PC-3 (cell line): ENCODE measurements at regions of chr5 and their contacts with region 1.

Region 1: GRCh38 chr5:57435701-57436134 is 46.9 kb downstream of the ACTBL2 start:
- DNase-seq: peak; percentile 93
- ATAC-seq: peak; percentile 92
- H3K4me3 ChIP-seq: no peak overlapping the region
- H3K27ac ChIP-seq: peak overlapping the region; percentile 99
- H3K4me1 ChIP-seq: peaks cover 47% of the 10 kb centered on the region
- H3K27me3 ChIP-seq: no peaks in the 10 kb centered on the region
- CTCF ChIP-seq: no peak

Region 2: GRCh38 chr5:57173185-57174127 is 262.3 kb before region 1 on chr5 and contains the start of gene GPBP1:
- CTCF ChIA-PET with region 1: no interaction called
- POLR2A ChIA-PET with region 1: interaction called, 3 read pairs
- intact Hi-C with region 1: loop called (anchors 10 kb)
- DNase-seq: peak; percentile 90
- ATAC-seq: peak; percentile 77
- H3K4me3 ChIP-seq: peak within 1 kb of the TSS; percentile 98
- H3K27ac ChIP-seq: peak within 1 kb of the TSS; percentile 98
- H3K4me1 ChIP-seq: no peaks in the 10 kb centered on the region
- H3K27me3 ChIP-seq: no peaks in the 10 kb centered on the region
- CTCF ChIP-seq: no peak
- total RNA-seq, gene GPBP1: 29.5 and 31.8 TPM in 2 replicates

Region 3: GRCh38 chr5:57338068-57338892 is 97.4 kb before region 1 on chr5:
- CTCF ChIA-PET with region 1: no interaction called
- POLR2A ChIA-PET with region 1: no interaction called
- intact Hi-C with region 1: loop called (anchors 1 kb)
- DNase-seq: peak; percentile 62
- ATAC-seq: peak; percentile 67
- H3K4me3 ChIP-seq: no peak overlapping the region
- H3K27ac ChIP-seq: peak overlapping the region; percentile 67
- H3K4me1 ChIP-seq: peaks cover 49% of the 10 kb centered on the region
- H3K27me3 ChIP-seq: no peaks in the 10 kb centered on the region
- CTCF ChIP-seq: peak; percentile 59

Region 4: DNA sequence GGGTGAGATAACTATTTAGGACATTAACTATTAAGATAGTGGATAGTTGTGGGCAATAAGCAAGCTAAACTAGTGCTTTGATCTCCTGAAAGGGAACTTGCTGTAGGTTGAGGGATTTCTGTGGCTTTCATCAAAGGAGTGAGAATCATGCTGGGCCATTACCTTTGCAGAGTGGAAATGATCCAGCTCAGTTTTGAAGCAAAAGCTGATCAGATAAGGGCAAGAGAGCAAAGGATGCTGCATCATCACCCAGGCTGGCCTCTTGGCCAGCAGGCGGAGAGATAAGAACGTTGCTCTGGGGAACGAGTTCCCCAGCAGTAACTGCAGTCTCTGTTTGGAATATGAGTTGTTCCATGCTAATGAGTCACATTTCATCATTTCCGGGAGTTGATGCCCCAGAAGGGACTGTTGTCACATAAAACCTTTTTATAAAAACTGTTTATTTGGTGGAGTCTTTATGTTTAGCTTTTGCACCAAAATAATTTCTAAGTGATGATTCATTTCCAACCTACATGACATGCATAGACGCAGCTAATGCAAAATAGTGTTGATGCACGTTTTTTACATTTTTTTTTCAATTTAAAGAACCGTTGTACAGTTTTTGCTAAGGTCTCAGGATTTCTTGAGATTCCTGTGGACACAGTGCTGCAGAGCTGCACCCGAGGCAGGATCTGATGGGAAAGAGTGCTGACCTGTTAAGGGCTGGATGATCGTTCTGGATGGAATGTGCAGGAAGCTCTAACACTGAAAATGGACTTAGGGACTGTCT is 52.4 kb before region 1 on chr5:
- CTCF ChIA-PET with region 1: no interaction called
- POLR2A ChIA-PET with region 1: no interaction called
- intact Hi-C with region 1: loop called (anchors 1 kb)
- DNase-seq: peak; percentile 87
- ATAC-seq: peak; percentile 95
- H3K4me3 ChIP-seq: peak overlapping the region; percentile 50; the same call in 1 of the 2 replicates
- H3K27ac ChIP-seq: peak overlapping the region; percentile 89
- H3K4me1 ChIP-seq: peaks cover 14% of the 10 kb centered on the region
- H3K27me3 ChIP-seq: no peaks in the 10 kb centered on the region
- CTCF ChIP-seq: peak; percentile 47

Region 5: DNA sequence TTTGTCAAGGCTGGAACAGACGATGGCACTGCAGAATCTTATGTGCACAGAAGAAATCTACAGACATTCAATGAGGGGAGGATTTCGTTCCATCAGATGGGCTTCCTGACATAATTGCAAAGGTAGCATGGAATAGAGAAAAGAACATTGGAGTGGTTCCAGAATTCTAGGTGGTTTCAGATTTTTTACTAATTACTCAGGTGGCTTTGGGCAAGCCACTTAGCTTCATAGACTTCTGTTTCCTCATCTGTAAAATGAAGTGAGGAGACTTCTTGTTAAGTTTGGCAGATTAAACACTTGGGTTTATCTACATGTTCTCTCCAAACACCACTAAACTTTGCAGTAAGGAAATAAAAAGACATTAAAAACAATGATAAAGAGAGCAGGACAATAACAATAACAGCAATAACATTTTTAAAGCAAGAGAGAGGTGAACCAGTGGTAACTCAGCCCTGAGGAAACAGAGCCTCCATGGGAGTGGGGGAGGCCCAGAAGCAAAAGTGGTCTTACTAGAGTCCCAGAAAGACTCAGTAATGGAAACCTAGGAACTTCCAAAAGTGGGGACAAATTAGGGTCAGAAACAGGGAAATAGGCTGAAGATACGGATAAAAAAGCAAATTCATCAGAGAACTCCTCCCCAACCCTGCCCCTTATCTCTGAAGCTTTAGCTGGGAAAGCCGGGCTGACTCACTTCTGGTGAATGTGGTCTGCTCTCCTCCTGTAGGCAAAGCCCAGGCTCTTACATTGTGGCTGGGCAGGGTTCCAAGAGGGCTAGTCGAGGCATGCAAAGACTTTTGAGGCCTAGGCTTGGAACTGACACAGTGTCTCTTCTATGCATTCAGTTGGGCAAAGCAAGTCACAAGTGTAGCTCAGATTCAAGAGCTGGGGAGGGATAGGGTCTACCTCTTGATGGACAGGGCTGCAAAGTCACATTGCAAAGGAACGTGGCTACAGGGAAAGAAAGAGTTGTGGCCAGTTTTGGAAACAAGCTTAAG is 58.7 kb after region 1 on chr5:
- CTCF ChIA-PET with region 1: no interaction called
- POLR2A ChIA-PET with region 1: interaction called, 3 read pairs
- intact Hi-C with region 1: loop called (anchors 1 kb)
- DNase-seq: peak; percentile 86
- ATAC-seq: peak; percentile 84
- H3K4me3 ChIP-seq: no peak overlapping the region
- H3K27ac ChIP-seq: peak overlapping the region; percentile 63
- H3K4me1 ChIP-seq: peaks cover 38% of the 10 kb centered on the region
- H3K27me3 ChIP-seq: no peaks in the 10 kb centered on the region
- CTCF ChIP-seq: no peak

Region 6: GRCh38 chr5:57825031-57825683 is 389.4 kb after region 1 on chr5:
- CTCF ChIA-PET with region 1: no interaction called
- POLR2A ChIA-PET with region 1: no interaction called
- intact Hi-C with region 1: loop called (anchors 5 kb)
- DNase-seq: peak; percentile 93
- ATAC-seq: peak; percentile 85
- H3K4me3 ChIP-seq: no peak overlapping the region
- H3K27ac ChIP-seq: peak overlapping the region; percentile 93
- H3K4me1 ChIP-seq: peaks cover 36% of the 10 kb centered on the region
- H3K27me3 ChIP-seq: no peaks in the 10 kb centered on the region
- CTCF ChIP-seq: no peak